OCI-LY7 (cell line): ENCODE measurements at regions of chr20 and their contacts with region 1.

Region 1: GRCh38 chr20:59032023-59032712 is at the start of gene ATP5F1E:
- DNase-seq: peak; percentile 97
- H3K4me3 ChIP-seq: peak within 1 kb of the TSS; percentile 76
- H3K27ac ChIP-seq: peak within 1 kb of the TSS; percentile 72
- H3K4me1 ChIP-seq: peaks cover 49% of the 10 kb centered on the region
- CTCF ChIP-seq: no peak
- total RNA-seq, gene ATP5F1E: 36.7 and 42.4 TPM in 2 replicates

Region 2: DNA sequence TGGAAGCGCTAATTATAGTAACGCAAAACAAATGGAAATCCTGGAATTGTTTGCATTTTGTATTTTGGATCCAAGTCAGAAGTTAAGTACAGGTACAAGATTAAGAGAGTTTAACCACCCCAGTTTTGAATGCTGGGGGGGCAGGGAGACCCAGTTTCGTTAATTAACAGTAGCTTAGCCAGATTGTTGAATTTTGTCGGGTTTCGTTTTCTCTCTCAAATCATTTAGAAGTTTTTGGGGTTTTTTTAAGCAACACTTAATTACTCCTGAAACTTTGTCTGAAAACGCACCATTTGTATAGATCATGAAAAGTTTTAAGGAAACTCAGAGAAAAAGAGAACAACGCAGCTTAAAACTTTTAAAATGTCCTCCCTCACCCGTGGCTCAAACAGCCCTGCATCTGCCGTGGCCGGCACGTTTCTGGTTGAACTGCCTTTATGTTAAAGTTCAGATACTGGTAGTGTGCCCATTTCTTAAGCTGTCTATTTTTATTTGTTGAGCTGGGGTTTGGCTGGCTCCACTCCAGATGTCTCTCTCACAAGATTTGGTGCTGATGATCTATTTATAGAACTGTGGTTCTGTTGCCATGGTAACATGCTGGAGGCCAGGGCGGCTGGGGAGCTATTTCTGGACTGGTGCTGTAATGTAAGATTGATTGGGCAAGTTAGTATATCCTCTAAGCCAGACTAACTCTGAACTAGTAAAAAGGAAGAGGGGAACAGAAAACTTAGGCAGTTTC is 124.6 kb before region 1 on chr20:
- CTCF ChIA-PET with region 1: no interaction called
- POLR2A ChIA-PET with region 1: interaction called, 4 read pairs
- intact Hi-C with region 1: loop called (anchors 5 kb)
- DNase-seq: peak; percentile 98
- H3K4me3 ChIP-seq: peak overlapping the region; percentile 60
- H3K27ac ChIP-seq: peak overlapping the region; percentile 98
- H3K4me1 ChIP-seq: peaks cover 40% of the 10 kb centered on the region
- CTCF ChIP-seq: no peak

Region 3: GRCh38 chr20:59173938-59174496 is 141.8 kb after region 1 on chr20:
- CTCF ChIA-PET with region 1: no interaction called
- POLR2A ChIA-PET with region 1: no interaction called
- intact Hi-C with region 1: no loop called
- DNase-seq: no peak
- H3K4me3 ChIP-seq: no peak overlapping the region
- H3K27ac ChIP-seq: no peak overlapping the region
- H3K4me1 ChIP-seq: peaks cover 13% of the 10 kb centered on the region
- CTCF ChIP-seq: no peak